Heart left ventricle (tissue), 16 donors: ENCODE measurements at regions of chr14 and their contacts with region 1.

Region 1: GRCh38 chr14:73426877-73427276 is 31.5 kb downstream of the NUMB start:
- DNase-seq: peak in 1 of 5 donors; percentile 11
- ATAC-seq: peak; percentile 38 to 72 (median 64)
- H3K4me3 ChIP-seq: no peak overlapping the region
- H3K27ac ChIP-seq: peak overlapping the region in 11 of 12 donors; percentile 13 to 82 (median 58)
- H3K4me1 ChIP-seq: peaks cover 0 to 65% (median 32%) of the 10 kb centered on the region in 12 donors
- H3K27me3 ChIP-seq: no peaks in the 10 kb centered on the region
- CTCF ChIP-seq: no peak
- POLR2A ChIP-seq: no peak

Region 2: DNA sequence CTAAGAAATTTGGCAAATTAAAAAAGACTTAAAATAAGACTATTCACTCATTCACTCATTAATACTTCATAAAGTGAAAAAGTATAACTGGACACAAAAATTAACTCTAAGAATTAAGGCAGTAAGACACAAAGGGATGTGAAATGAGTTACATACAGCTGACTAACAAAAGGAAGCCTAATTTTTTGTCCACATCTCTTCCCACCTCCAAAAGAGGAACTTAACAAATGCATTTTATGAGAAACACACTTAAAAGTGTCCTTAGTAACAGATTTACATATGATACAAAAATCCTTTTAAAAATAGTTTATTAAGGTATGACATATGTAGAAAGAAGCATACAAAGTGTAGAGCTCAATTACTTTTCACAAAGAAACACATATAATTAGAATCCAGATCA is 57.4 kb before region 1 on chr14:
- intact Hi-C with region 1: no loop called
- DNase-seq: no peak
- ATAC-seq: no peak
- H3K4me3 ChIP-seq: no peak overlapping the region
- H3K27ac ChIP-seq: no peak overlapping the region
- H3K4me1 ChIP-seq: peaks cover 0 to 10% (median 1%) of the 10 kb centered on the region in 12 donors
- H3K27me3 ChIP-seq: no peaks in the 10 kb centered on the region
- CTCF ChIP-seq: no peak
- POLR2A ChIP-seq: no peak

Region 3: GRCh38 chr14:73458151-73458976 is 31.5 kb after region 1 on chr14 and contains the start of gene NUMB:
- intact Hi-C with region 1: loop called in 2 of 10 experiments (anchors 5 kb)
- DNase-seq: peak; percentile 97 to 99 (median 98)
- ATAC-seq: peak; percentile 97 to 99 (median 98)
- H3K4me3 ChIP-seq: peak within 1 kb of the TSS; percentile 80 to 99 (median 88)
- H3K27ac ChIP-seq: peak within 1 kb of the TSS; percentile 83 to 97 (median 90)
- H3K4me1 ChIP-seq: peaks cover 10 to 82% (median 61%) of the 10 kb centered on the region in 12 donors
- H3K27me3 ChIP-seq: no peaks in the 10 kb centered on the region
- CTCF ChIP-seq: peak in 4 of 12 donors; percentile 6 to 34 (median 10)
- POLR2A ChIP-seq: peak; percentile 50 to 81
- total RNA-seq, gene NUMB: 22.4 to 59.1 (median 35.0) TPM

Region 4: DNA sequence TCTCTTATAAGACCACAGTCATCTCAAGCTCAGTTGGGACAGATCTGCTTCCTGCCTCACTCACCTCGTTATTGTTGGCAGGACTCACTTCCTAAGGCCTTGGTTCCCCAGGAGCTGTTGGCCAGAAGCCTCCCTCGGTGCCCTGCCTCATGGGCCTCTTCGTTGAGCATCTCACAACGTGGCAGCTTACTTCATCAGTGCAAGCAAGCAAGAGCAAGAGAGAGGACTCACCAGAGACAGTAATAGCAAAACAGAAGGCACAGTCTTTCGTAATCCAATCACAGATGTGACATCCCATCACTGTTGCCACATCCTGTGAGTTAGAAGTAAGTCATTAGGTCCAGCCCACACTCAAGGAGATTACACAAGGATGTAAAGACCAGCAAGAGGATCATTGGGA is 36.5 kb after region 1 on chr14:
- intact Hi-C with region 1: loop called in 2 of 10 experiments (anchors 5 kb)
- DNase-seq: peak in 3 of 5 donors; percentile 23 to 61 (median 27)
- ATAC-seq: peak in 2 of 4 donors; percentile 14 to 31
- H3K4me3 ChIP-seq: peak overlapping the region in 1 of 12 donors; percentile 30
- H3K27ac ChIP-seq: peak overlapping the region in 11 of 12 donors; percentile 48 to 87 (median 64)
- H3K4me1 ChIP-seq: peaks cover 12 to 90% (median 47%) of the 10 kb centered on the region in 12 donors
- H3K27me3 ChIP-seq: no peaks in the 10 kb centered on the region
- CTCF ChIP-seq: no peak
- POLR2A ChIP-seq: no peak

Region 5: DNA sequence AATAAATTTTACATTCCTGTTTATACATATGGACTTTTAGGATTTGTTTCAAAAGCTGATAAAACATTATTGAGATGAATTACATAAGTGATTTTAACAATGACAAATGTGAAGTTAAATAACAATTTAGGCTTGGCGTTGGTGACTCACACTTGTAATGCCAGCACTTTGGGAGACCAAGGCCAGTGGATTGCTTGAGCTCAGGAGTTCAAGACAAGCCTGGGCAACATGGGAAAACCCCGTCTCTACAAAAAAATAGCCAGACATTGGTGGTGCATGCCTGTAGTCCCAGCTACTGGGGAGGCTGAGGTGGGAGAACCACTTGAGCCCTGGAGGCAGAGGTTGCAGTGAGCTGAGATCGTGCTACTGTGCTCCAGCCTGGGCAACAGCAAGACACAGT is 149.5 kb after region 1 on chr14:
- intact Hi-C with region 1: no loop called
- DNase-seq: no peak
- ATAC-seq: no peak
- H3K4me3 ChIP-seq: no peak overlapping the region
- H3K27ac ChIP-seq: no peak overlapping the region
- H3K4me1 ChIP-seq: peaks cover 0 to 6% (median 0%) of the 10 kb centered on the region in 12 donors
- H3K27me3 ChIP-seq: no peaks in the 10 kb centered on the region
- CTCF ChIP-seq: no peak
- POLR2A ChIP-seq: no peak

Region 6: GRCh38 chr14:73759714-73760597 is 333.1 kb after region 1 on chr14:
- intact Hi-C with region 1: no loop called
- DNase-seq: peak; percentile 96 to 97 (median 97)
- ATAC-seq: peak; percentile 55 to 89 (median 86)
- H3K4me3 ChIP-seq: peak overlapping the region; percentile 64 to 95 (median 79)
- H3K27ac ChIP-seq: peak overlapping the region; percentile 89 to 100 (median 98)
- H3K4me1 ChIP-seq: peaks cover 34 to 96% (median 86%) of the 10 kb centered on the region in 12 donors
- H3K27me3 ChIP-seq: no peaks in the 10 kb centered on the region
- CTCF ChIP-seq: peak in 3 of 12 donors; percentile 8 to 32 (median 32)
- POLR2A ChIP-seq: peak in 1 of 2 donors; percentile 68